Mammary epithelial cell (primary cell): ENCODE measurements at regions of chr20 and their contacts with region 1.

Region 1: GRCh38 chr20:46963758-46964617 is 69.3 kb downstream of the EYA2 start:
- DNase-seq: peak; percentile 89
- H3K4me3 ChIP-seq: no peak overlapping the region
- H3K27ac ChIP-seq: no peak overlapping the region
- H3K4me1 ChIP-seq: peaks cover 30% of the 10 kb centered on the region
- H3K27me3 ChIP-seq: no peaks in the 10 kb centered on the region
- CTCF ChIP-seq: no peak

Region 2: GRCh38 chr20:47125583-47126373 is 161.8 kb after region 1 on chr20:
- CTCF ChIA-PET with region 1: no interaction called
- dilution Hi-C with region 1: no loop called
- in situ Hi-C with region 1: no loop called
- intact Hi-C with region 1: loop called (anchors 10 kb)
- DNase-seq: peak; percentile 94
- H3K4me3 ChIP-seq: peak overlapping the region; percentile 7 to 23 (median 20)
- H3K27ac ChIP-seq: peak overlapping the region; percentile 88
- H3K4me1 ChIP-seq: peaks cover 35% of the 10 kb centered on the region
- H3K27me3 ChIP-seq: no peaks in the 10 kb centered on the region
- CTCF ChIP-seq: peak in 1 of 2 donors; percentile 11